AG04449 (cell line): ENCODE measurements at regions of chr19 and their contacts with region 1.

Region 1: DNA sequence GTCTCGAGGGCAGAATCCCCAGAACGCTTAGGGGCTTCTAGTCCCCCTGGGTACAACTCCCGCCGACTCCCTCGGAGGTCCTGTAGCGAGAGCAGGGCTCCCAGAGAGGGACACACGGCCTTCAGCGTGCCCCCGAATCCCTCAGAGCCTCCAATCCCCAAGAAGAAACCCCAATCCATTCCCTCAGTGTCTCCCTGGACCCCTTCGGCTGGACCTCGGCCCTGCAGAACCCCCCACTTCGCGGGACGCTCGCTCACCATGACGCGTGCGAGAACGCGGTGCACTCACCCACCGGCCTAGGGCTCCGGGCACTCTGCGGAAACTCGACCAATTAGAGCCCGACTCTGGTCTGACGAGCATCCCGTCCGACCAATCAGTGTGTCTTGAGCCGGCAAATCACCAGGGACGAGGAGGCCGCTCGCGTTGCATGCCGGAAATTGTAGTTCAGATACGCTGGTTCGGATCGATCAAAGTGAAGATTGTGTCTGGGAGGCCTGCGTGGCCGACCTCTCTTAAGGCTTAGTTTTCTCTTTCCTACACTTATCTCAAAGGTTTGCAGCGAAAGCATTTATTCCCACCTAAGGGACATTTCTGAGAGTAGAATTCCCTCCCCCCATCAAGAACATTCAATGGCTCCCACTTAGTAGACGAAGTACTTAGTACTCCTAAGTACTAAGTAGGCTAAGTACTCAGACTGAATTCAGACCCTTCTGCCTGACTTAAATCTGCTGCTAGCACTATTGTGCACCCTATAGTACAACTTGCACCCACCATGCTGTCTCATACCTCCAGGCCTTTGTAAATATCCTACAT is at the start of gene TMEM161A:
- DNase-seq: peak; percentile 96
- H3K4me3 ChIP-seq: peak within 1 kb of the TSS; percentile 69
- CTCF ChIP-seq: no peak

Region 2: DNA sequence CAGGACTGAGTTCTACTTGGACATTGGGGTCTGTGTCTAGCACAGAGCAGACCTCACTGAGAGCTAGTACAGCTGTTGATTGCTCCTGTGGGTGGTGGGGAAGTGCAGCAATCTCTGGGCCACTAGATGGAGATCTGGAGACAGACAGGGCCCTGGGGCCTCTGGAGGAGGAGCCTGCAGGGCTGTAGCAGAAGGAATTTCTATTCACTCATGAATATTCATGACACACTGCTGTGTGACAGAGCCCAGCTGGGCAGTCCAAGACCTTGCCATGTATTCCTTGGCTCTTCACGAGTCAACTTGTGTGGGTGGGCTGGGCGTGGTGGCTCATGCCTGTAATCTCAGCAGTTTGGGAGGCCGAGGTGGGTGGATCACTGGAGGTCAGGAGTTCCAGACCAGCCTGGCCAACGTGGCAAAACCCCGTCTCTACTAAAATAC is 142.6 kb before region 1 on chr19:
- CTCF ChIA-PET with region 1: interaction called, 26 read pairs
- POLR2A ChIA-PET with region 1: no interaction called
- DNase-seq: peak; percentile 46
- H3K4me3 ChIP-seq: no peak overlapping the region
- CTCF ChIP-seq: peak; percentile 71

Region 3: GRCh38 chr19:19053508-19054314 is 84.7 kb before region 1 on chr19:
- CTCF ChIA-PET with region 1: interaction called, 58 read pairs
- POLR2A ChIA-PET with region 1: no interaction called
- DNase-seq: no peak
- H3K4me3 ChIP-seq: no peak overlapping the region
- CTCF ChIP-seq: peak; percentile 71

Region 4: GRCh38 chr19:19098703-19099632 is 39.4 kb before region 1 on chr19:
- CTCF ChIA-PET with region 1: no interaction called
- POLR2A ChIA-PET with region 1: no interaction called
- DNase-seq: no peak
- H3K4me3 ChIP-seq: no peak overlapping the region
- CTCF ChIP-seq: no peak

Region 5: DNA sequence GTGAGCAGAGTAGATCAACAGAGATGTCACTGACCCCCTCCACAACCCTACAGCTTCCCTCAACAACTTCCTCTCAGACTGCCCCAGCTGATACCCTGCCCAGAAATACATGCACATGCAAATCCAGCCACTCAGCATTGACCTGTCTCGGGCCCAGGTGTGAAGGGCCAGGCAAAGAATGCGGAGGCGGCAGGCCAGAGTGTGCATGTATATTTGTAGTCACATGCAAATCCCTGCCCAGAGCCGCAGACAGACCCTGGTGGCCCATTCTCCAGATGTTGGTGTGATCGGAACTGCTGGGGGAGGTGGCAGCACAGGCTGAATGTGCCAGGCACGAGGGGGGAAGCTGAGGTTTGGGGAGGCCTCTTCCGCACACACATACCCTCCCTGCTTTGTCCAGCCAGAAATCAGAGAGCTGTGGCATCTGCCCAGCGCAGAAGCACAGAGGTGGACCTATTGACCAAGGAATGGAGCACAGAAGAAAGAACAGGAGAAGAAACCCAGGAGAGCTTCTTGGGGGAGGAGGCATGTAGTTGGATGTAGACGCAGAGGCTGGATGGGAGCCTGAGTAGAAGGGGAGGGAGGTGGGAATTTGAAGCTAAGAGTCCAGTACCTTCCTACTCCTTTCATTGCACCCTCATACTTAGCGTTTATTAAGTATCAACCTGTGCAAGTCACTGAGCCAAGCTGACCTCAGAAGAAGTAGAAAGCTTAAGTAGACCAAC is 17.3 kb after region 1 on chr19:
- CTCF ChIA-PET with region 1: interaction called, 182 read pairs
- POLR2A ChIA-PET with region 1: no interaction called
- DNase-seq: no peak
- H3K4me3 ChIP-seq: no peak overlapping the region
- CTCF ChIP-seq: no peak